Thyroid gland (tissue), 4 donors: ENCODE measurements at regions of chr3 and their contacts with region 1.

Region 1: DNA sequence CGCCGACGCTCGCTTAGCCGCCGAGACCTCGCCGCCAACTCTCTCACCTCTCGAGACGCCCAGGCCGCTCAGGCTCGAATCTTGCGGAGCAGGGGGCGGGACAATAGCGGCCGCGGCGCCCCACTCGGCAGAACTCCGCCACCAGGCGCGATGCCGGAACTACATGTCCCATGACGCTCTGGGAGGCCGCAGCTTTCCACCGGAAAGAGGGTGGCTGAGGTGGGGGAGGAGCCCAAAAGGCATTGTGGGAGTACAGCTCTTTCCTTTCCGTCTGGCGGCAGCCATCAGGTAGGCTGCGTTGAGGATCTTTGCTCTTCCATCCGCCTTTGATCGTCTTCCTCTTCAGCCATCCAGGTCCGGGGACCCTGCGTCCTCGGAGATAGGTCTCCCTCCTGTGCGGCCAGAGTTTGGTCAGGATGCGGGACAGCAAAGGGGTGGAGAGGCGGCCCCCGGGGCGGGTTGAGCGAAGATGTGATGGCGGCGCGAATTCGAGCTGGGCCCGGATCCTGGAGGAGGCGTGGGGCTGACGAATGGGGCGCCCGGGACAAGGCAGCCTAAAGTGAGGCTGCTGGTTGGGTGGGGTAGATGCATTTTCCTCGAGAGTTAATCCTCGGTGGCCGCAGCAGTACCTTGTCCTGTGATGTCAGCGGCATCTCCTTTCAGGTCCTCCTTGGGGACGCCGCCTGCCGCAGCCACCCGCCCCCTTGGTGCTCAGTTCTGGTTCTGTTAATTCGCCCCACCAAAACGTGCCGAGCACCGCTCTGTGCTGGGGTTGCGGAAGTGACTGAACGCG is at the starts of genes NKIRAS1 and RPL15:
- DNase-seq: peak; percentile 98 to 99
- H3K4me3 ChIP-seq: peak within 1 kb of the TSS; percentile 73 to 90 (median 75)
- H3K27ac ChIP-seq: peak within 1 kb of the TSS; percentile 94 to 98 (median 96)
- H3K4me1 ChIP-seq: peaks cover 27 to 34% of the 10 kb centered on the region in 2 donors
- H3K27me3 ChIP-seq: no peaks in the 10 kb centered on the region
- CTCF ChIP-seq: peak in 5 of 6 experiments; percentile 49 to 82 (median 60)
- POLR2A ChIP-seq: peak; percentile 93 to 98
- total RNA-seq, gene NKIRAS1: 17.5 to 22.2 (median 19.7) TPM
- total RNA-seq, gene RPL15: 1,700 to 2,512 (median 2,310) TPM

Region 2: DNA sequence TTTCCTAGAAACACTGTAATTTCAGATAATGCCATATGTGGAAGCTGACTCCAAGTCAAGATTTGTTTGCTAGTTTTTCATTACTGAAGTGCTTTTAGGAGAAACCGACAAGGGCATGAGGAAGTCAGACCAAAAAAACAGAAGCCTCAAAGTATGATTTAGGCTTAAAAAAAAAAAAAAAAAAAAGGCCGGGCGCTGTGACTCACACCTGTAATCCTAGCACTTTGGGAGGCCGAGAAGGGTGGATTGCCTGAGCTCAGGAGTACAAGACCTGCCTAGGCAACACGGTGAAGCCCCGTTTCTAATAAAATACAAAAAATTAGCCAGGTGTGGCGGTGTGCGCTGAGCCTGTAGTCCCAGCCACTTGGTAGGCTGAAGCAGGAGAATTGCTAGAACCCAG is 11.4 kb after region 1 on chr3:
- intact Hi-C with region 1: no loop called
- DNase-seq: peak; percentile 74 to 75
- H3K4me3 ChIP-seq: no peak overlapping the region
- H3K27ac ChIP-seq: peak overlapping the region in 2 of 3 donors; percentile 33 to 38
- H3K4me1 ChIP-seq: peaks cover 3 to 7% of the 10 kb centered on the region in 2 donors
- H3K27me3 ChIP-seq: no peaks in the 10 kb centered on the region
- CTCF ChIP-seq: no peak
- POLR2A ChIP-seq: no peak

Region 3: GRCh38 chr3:23945903-23946751 is 29.0 kb after region 1 on chr3:
- intact Hi-C with region 1: loop called (anchors 2 kb)
- DNase-seq: peak; percentile 98 to 99
- H3K4me3 ChIP-seq: peak overlapping the region in 2 of 3 donors; percentile 54 to 70
- H3K27ac ChIP-seq: peak overlapping the region; percentile 87 to 97 (median 95)
- H3K4me1 ChIP-seq: peaks cover 42 to 47% of the 10 kb centered on the region in 2 donors
- H3K27me3 ChIP-seq: no peaks in the 10 kb centered on the region
- CTCF ChIP-seq: peak in 1 of 6 experiments; percentile 7
- POLR2A ChIP-seq: peak; percentile 72 to 89

Region 4: DNA sequence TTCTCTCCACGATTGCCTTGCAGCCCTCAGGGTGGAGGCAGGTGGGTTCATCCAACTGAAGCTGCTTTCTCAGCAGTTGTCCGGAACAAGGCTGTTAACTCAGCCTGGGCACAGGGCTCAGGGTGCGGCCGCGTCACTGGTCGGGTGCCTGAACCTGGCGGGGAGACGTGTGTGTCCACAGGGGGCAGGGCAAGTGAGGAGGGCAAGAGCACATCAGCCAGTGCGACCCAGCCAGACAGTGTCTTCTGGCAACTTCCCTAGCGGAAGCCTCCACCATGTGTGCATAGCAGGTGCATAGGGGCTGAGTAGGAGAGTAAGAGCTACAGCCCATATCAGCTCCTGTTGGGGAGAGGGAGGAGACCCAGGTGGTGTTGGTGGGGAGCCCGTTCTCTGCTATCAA is 728.0 kb after region 1 on chr3:
- intact Hi-C with region 1: no loop called
- DNase-seq: no peak
- H3K4me3 ChIP-seq: no peak overlapping the region
- H3K27ac ChIP-seq: no peak overlapping the region
- H3K4me1 ChIP-seq: no peaks in the 10 kb centered on the region
- H3K27me3 ChIP-seq: no peaks in the 10 kb centered on the region
- CTCF ChIP-seq: no peak
- POLR2A ChIP-seq: no peak